HCT116 (cell line): ENCODE measurements at regions of chr9 and their contacts with region 1.

Region 1: GRCh38 chr9:128361986-128362646 is 9.1 kb upstream of the URM1 start:
- DNase-seq: peak; percentile 59
- ATAC-seq: peak; percentile 92
- H3K4me3 ChIP-seq: peak overlapping the region; percentile 25 to 33
- H3K27ac ChIP-seq: peak overlapping the region; percentile 29
- H3K4me1 ChIP-seq: peaks cover 7 to 28% of the 10 kb centered on the region in 2 experiments; a peak in 3 of 4 replicates
- H3K27me3 ChIP-seq: no peaks in the 10 kb centered on the region
- CTCF ChIP-seq: peak in 2 of 3 experiments; percentile 85 to 88; a peak in 4 of 6 replicates
- POLR2A ChIP-seq: no peak
- RAD21 ChIP-seq: no peak

Region 2: GRCh38 chr9:128412120-128412790 is 50.1 kb after region 1 on chr9:
- CTCF ChIA-PET with region 1: interaction called, 33 read pairs
- POLR2A ChIA-PET with region 1: interaction called, 4 read pairs
- RAD21 ChIA-PET with region 1: no interaction called
- intact Hi-C with region 1: loop called (anchors 1 kb)
- DNase-seq: no peak
- ATAC-seq: peak; percentile 65
- H3K4me3 ChIP-seq: no peak overlapping the region
- H3K27ac ChIP-seq: no peak overlapping the region
- H3K4me1 ChIP-seq: peaks cover 4 to 14% of the 10 kb centered on the region in 2 experiments; a peak in 3 of 4 replicates
- H3K27me3 ChIP-seq: no peaks in the 10 kb centered on the region
- CTCF ChIP-seq: peak; percentile 67 to 81 (median 79)
- POLR2A ChIP-seq: no peak
- RAD21 ChIP-seq: peak; percentile 90

Region 3: GRCh38 chr9:128420060-128420650 is 58.0 kb after region 1 on chr9:
- CTCF ChIA-PET with region 1: interaction called, 20 read pairs
- POLR2A ChIA-PET with region 1: interaction called, 4 read pairs
- RAD21 ChIA-PET with region 1: interaction called in 1 of 2 experiments, 8 read pairs
- intact Hi-C with region 1: no loop called
- DNase-seq: no peak
- ATAC-seq: peak; percentile 81
- H3K4me3 ChIP-seq: peak overlapping the region; percentile 79 to 93
- H3K27ac ChIP-seq: peak overlapping the region; percentile 78
- H3K4me1 ChIP-seq: peaks cover 31 to 51% of the 10 kb centered on the region in 2 experiments
- H3K27me3 ChIP-seq: no peaks in the 10 kb centered on the region
- CTCF ChIP-seq: peak in 2 of 3 experiments; percentile 78 to 80; a peak in 4 of 6 replicates
- POLR2A ChIP-seq: peak; percentile 18
- RAD21 ChIP-seq: no peak